Left cardiac atrium (tissue), 4 donors: ENCODE measurements at regions of chr10 and their contacts with region 1.

Region 1: DNA sequence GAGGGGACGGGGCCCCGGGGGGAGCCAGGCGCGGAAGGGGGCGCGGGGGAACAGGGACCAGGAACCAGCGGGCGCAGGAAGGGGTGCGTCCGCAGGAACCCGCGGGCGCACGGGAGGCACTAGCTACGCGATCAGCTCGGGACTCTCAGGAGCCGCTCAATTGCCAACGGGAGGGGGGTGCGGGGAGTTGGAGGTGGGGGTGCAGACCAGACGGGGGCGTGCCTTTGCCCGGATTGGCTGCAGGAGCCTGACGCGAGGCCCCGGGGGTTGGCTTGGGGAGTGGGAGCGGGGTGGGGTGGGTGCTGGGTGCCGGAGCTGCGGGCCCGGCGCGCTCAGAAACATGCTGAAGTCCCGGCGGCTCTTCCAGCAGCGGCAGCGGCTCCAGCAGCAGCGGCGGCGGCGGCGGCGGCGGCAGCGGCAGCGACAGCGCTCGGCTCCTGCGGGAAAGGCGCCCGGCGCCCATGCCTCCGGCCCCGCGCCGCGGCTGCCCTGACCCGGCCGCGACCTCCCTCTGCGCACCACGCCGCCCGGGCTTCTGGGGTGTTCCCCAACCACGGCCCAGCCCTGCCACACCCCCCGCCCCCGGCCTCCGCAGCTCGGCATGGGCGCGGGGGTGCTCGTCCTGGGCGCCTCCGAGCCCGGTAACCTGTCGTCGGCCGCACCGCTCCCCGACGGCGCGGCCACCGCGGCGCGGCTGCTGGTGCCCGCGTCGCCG is at the start of gene ADRB1:
- DNase-seq: peak; percentile 92
- ATAC-seq: peak; percentile 90 to 91
- total RNA-seq, gene ADRB1: 53.0 to 60.9 TPM

Region 2: GRCh38 chr10:113746217-113746957 is 297.3 kb before region 1 on chr10:
- intact Hi-C with region 1: no loop called
- DNase-seq: no peak
- ATAC-seq: no peak

Region 3: GRCh38 chr10:113899952-113900598 is 143.6 kb before region 1 on chr10:
- intact Hi-C with region 1: loop called in 1 of 2 experiments (anchors 5 kb)
- DNase-seq: no peak
- ATAC-seq: peak; percentile 67 to 90

Region 4: GRCh38 chr10:113916053-113916452 is 127.6 kb before region 1 on chr10:
- intact Hi-C with region 1: no loop called
- DNase-seq: no peak
- ATAC-seq: no peak

Region 5: DNA sequence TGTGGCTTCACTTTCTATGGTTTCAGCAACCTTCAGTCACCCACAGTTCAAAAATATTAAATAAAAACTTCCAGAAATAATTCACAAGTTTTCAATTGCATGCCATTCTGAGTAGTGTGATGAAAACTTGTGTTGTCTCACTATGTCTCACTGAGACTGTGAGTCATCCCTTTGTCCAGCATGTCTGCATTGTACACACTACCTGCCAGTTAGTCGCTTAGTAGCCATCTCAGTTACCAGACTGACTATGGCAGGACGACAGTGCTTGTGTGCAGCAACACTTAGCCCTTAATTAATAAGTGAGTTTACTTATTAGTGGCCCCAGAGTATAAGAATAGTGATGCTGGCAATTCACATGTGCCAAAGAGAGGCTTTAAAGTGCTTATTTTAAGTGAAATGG is 107.8 kb after region 1 on chr10:
- intact Hi-C with region 1: no loop called
- DNase-seq: no peak
- ATAC-seq: peak in 1 of 2 donors; percentile 82